Endothelial cell of umbilical vein (primary cell): ENCODE measurements at regions of chr15 and their contacts with region 1.

Region 1: DNA sequence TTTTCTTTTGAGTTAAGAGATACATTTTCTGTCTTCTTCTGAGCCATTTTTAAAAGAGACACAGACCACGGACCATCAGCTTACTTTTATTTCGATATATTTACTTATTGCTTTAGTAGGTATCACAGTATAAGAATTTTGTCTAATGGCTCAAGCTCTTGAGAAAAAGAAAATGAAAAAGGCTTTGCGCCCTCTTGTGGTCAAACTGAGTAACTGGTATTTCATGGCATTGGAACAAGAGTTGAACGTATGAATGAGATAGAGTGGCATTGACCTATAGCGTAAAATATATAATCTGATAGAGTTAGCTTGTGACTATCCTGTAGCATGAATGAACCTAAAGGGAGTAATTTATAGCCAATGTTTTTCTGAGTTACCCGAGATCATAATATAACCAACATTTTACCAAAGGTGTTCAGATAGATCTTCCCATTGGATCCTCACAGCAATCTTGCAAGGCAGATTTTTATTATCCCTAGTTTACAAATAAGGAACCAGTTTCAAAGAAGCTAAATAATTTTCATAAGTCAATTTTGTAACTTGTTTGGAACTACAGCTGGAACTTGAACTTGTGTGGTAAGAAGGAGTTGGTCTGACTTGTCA is 154.6 kb downstream of the POLR2M start:
- DNase-seq: peak; percentile 84
- H3K4me3 ChIP-seq: no peak overlapping the region
- H3K27ac ChIP-seq: peak overlapping the region; percentile 45
- H3K4me1 ChIP-seq: peaks cover 10% of the 10 kb centered on the region
- H3K27me3 ChIP-seq: peaks cover 0 to 2% of the 10 kb centered on the region in 2 experiments
- CTCF ChIP-seq: peak; percentile 58
- POLR2A ChIP-seq: no peak

Region 2: GRCh38 chr15:57640935-57641682 is 220.0 kb before region 1 on chr15:
- CTCF ChIA-PET with region 1: interaction called, 5 read pairs
- POLR2A ChIA-PET with region 1: no interaction called
- dilution Hi-C with region 1: no loop called
- intact Hi-C with region 1: loop called (anchors 5 kb)
- DNase-seq: peak; percentile 41
- H3K4me3 ChIP-seq: no peak overlapping the region
- H3K27ac ChIP-seq: no peak overlapping the region
- H3K4me1 ChIP-seq: no peaks in the 10 kb centered on the region
- H3K27me3 ChIP-seq: no peaks in the 10 kb centered on the region
- CTCF ChIP-seq: peak; percentile 32 to 46
- POLR2A ChIP-seq: no peak

Region 3: GRCh38 chr15:57732526-57733331 is 128.4 kb before region 1 on chr15:
- CTCF ChIA-PET with region 1: interaction called, 74 read pairs
- POLR2A ChIA-PET with region 1: no interaction called
- dilution Hi-C with region 1: no loop called
- intact Hi-C with region 1: no loop called
- DNase-seq: peak; percentile 79
- H3K4me3 ChIP-seq: peak overlapping the region in 1 of 3 experiments; percentile 15
- H3K27ac ChIP-seq: no peak overlapping the region
- H3K4me1 ChIP-seq: peaks cover 10% of the 10 kb centered on the region
- H3K27me3 ChIP-seq: no peaks in the 10 kb centered on the region
- CTCF ChIP-seq: peak; percentile 78 to 89
- POLR2A ChIP-seq: no peak

Region 4: DNA sequence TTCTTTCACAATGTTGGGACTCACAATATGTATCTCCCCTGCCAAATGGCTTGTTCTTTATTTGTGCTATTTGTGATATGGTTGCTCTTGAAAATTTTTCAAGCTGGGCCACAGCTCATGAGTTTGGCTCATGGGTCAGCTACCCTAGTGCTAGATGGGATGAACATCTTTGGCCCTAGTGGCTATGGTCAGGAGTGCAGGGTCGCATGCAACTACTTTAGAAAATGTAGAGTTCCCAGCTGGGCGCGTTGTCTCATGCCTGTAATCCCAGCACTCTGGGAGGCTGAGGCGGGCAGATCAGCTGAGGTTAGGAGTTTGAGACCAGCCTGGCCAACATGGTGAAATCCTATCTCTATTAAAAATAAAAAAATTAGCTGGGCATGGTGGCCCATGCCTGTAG is 98.8 kb before region 1 on chr15:
- CTCF ChIA-PET with region 1: interaction called, 20 read pairs
- POLR2A ChIA-PET with region 1: no interaction called
- dilution Hi-C with region 1: no loop called
- intact Hi-C with region 1: no loop called
- DNase-seq: no peak
- H3K4me3 ChIP-seq: no peak overlapping the region
- H3K27ac ChIP-seq: no peak overlapping the region
- H3K4me1 ChIP-seq: no peaks in the 10 kb centered on the region
- H3K27me3 ChIP-seq: no peaks in the 10 kb centered on the region
- CTCF ChIP-seq: no peak
- POLR2A ChIP-seq: no peak

Region 5: GRCh38 chr15:57780471-57780870 is 80.7 kb before region 1 on chr15:
- CTCF ChIA-PET with region 1: interaction called, 13 read pairs
- POLR2A ChIA-PET with region 1: no interaction called
- dilution Hi-C with region 1: no loop called
- intact Hi-C with region 1: no loop called
- DNase-seq: no peak
- H3K4me3 ChIP-seq: no peak overlapping the region
- H3K27ac ChIP-seq: no peak overlapping the region
- H3K4me1 ChIP-seq: no peaks in the 10 kb centered on the region
- H3K27me3 ChIP-seq: no peaks in the 10 kb centered on the region
- CTCF ChIP-seq: no peak
- POLR2A ChIP-seq: no peak

Region 6: DNA sequence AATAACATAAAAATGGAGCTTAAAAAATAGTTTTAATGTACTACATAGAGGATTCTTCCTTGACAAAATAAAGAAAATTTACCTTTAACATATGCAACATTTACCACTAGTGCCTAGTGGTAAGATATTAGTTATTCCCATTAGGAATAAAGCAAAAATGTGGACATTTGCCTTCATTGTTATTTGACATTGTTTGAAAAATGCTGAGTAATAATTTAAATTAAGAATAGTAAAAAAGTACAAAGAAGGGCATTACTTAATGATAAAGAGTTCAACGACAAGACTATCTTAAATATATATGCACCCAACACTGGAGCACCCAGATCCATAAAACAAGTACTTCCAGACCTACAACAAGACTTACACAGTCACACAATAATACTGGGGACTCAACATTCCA is 29.0 kb before region 1 on chr15:
- CTCF ChIA-PET with region 1: interaction called, 14 read pairs
- POLR2A ChIA-PET with region 1: no interaction called
- dilution Hi-C with region 1: no loop called
- intact Hi-C with region 1: no loop called
- DNase-seq: no peak
- H3K4me3 ChIP-seq: no peak overlapping the region
- H3K27ac ChIP-seq: no peak overlapping the region
- H3K4me1 ChIP-seq: peaks cover 11% of the 10 kb centered on the region
- H3K27me3 ChIP-seq: no peaks in the 10 kb centered on the region
- CTCF ChIP-seq: no peak
- POLR2A ChIP-seq: no peak

Region 7: GRCh38 chr15:57873564-57874209 is 12.6 kb after region 1 on chr15:
- CTCF ChIA-PET with region 1: interaction called, 17 read pairs
- POLR2A ChIA-PET with region 1: no interaction called
- dilution Hi-C with region 1: no loop called
- intact Hi-C with region 1: no loop called
- DNase-seq: peak; percentile 57
- H3K4me3 ChIP-seq: no peak overlapping the region
- H3K27ac ChIP-seq: peak overlapping the region; percentile 40
- H3K4me1 ChIP-seq: peaks cover 25% of the 10 kb centered on the region
- H3K27me3 ChIP-seq: no peaks in the 10 kb centered on the region
- CTCF ChIP-seq: no peak
- POLR2A ChIP-seq: no peak